ENCODE measurements at regions of chr17 and their contacts with region 1.

Region 1: DNA sequence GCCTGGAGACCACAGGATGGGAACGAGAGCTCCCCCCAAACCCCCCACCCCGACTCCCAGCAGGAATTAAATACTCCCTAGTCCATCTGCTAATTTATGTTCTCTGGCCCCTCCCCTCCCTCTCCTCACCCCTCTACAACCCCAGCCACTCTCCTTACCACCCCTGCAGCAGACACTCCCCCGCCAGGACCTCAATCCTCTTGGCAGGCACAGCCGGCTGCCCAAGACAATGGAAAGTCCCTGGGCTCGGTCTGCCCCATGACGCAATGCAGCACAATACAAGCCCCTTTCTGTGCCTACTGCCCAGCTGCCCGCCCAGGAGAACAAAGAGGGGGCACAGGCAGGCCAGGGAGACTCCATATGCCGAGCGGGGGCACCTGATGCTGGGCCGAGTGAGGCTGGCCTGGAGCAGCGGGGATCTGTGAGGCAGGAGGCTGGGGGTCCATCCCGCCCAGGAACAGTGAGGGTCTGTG is 30.3 kb upstream of the CDC42EP4 start:
- DNase-seq: peak; percentile 88
- H3K4me3 ChIP-seq: no peak overlapping the region
- H3K27ac ChIP-seq: peak overlapping the region; percentile 74
- H3K4me1 ChIP-seq: peaks cover 28% of the 10 kb centered on the region
- H3K27me3 ChIP-seq: no peaks in the 10 kb centered on the region
- CTCF ChIP-seq: no peak

Region 2: DNA sequence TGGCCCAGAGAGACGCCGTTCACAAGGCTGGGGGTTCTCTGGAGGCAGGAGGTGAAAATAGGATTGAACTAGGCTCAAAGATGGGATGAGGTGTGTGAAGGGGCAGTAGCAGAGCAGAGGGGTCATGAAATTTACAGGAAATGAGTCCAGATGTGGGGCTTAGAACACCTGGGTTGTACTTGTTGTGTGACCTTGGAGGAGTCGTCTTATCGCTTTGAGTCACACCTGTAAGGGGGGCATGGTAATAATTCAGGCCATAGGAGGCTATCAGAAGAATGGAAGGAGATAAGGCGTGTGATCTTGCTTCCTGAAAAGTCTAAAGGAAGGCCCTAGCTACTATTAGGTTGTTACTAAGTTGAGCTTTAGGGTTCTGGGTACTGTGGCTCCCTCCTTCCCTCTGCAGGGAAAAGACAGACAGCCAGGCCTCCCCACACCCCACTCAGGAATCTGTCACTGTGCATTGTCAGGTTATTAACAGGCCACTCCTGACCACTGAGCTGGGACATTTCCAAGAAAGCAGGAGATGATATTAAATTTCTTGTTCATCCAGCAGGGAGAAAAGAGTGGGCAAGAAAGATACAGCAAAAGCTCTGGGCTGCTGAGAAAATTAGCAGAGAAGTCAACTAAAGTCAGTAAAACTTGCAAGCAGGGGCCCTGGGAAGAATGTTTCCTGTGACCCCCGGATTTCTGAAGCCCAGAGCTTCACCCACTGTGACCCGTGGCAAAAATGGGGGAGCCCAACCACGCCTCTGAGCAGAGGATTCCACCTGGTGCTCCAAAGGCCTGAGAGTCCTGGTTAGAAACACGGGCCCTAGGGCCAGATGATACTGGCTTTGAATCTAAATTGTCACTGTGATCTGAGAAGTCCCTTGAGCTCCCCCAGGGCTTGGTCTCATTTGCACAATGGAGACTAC is 24.3 kb before region 1 on chr17:
- CTCF ChIA-PET with region 1: interaction called, 19 read pairs
- POLR2A ChIA-PET with region 1: no interaction called
- intact Hi-C with region 1: no loop called
- DNase-seq: no peak
- H3K4me3 ChIP-seq: no peak overlapping the region
- H3K27ac ChIP-seq: no peak overlapping the region
- H3K4me1 ChIP-seq: no peaks in the 10 kb centered on the region
- H3K27me3 ChIP-seq: no peaks in the 10 kb centered on the region
- CTCF ChIP-seq: no peak

Measured in A673 (cell line).